GM10248 (cell line): ENCODE measurements at regions of chr16 and their contacts with region 1.

Region 1: DNA sequence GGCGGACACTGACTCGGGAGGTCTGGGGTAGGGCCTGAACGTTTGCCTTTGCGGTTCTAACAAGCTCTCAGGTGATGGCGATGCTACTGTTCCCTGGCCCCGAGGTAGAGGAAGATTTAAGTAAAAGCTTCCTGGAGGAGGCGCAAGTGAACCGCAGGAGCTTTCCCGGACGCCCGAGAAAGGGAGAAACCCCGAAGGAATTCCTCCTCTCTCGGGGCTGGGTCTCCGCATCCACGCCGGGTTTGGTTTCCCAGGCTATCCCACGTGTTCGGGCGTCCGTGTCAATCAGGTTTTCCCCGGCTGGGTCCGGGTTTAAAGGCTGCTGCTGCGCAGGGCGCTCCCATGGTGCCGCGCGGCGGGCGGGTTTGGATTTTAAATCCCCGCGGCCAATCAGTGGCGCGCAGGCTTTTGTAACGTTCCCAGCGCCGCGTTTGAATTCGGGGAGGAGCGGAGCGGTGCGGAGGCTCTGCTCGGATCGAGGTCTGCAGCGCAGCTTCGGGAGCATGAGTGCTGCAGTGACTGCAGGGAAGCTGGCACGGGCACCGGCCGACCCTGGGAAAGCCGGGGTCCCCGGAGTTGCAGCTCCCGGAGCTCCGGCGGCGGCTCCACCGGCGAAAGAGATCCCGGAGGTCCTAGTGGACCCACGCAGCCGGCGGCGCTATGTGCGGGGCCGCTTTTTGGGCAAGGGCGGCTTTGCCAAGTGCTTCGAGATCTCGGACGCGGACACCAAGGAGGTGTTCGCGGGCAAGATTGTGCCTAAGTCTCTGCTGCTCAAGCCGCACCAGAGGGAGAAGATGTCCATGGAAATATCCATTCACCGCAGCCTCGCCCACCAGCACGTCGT is at the start of gene PLK1:
- DNase-seq: peak; percentile 94
- CTCF ChIP-seq: no peak

Region 2: DNA sequence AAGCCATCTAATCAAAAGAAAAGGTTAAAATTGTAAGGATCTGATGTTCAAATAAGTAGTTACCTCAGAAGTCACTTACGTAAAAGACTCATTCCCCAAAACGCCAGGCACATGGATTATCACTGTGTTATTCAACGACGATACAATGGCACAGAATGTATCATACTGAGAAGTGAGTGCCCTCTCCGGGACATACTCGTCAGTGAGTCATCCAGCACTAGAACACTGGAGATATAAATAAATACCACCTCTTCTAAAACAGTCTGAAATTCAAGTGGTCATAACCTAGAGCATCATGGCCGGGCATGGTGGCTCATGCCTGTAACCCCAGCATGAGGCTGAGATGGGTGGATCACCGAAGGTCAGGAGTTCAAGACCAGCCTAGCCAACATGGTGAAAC is 554.3 kb before region 1 on chr16:
- CTCF ChIA-PET with region 1: no interaction called
- POLR2A ChIA-PET with region 1: no interaction called
- DNase-seq: no peak
- CTCF ChIP-seq: no peak

Region 3: DNA sequence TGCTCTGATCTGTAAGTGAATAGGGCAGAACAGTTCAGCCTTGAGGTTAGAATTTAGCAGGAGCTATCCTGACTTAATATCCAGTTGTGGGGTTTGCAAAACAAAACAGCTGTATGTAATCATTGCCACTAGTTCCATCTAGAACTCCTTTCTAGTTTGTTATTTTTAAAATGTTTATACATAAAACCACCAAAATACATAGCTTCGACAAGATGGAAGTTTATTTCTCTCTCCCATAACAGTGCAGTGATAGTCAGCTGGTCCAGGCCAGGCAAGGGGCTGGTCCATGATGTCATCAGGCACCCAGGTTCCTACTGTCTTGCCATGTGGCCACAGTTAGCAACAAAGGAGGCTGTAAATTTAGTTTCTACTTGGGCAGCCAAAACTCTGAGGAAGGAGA is 10.4 kb before region 1 on chr16:
- CTCF ChIA-PET with region 1: interaction called, 10 read pairs
- POLR2A ChIA-PET with region 1: interaction called, 3 read pairs
- DNase-seq: no peak
- CTCF ChIP-seq: no peak

Region 4: DNA sequence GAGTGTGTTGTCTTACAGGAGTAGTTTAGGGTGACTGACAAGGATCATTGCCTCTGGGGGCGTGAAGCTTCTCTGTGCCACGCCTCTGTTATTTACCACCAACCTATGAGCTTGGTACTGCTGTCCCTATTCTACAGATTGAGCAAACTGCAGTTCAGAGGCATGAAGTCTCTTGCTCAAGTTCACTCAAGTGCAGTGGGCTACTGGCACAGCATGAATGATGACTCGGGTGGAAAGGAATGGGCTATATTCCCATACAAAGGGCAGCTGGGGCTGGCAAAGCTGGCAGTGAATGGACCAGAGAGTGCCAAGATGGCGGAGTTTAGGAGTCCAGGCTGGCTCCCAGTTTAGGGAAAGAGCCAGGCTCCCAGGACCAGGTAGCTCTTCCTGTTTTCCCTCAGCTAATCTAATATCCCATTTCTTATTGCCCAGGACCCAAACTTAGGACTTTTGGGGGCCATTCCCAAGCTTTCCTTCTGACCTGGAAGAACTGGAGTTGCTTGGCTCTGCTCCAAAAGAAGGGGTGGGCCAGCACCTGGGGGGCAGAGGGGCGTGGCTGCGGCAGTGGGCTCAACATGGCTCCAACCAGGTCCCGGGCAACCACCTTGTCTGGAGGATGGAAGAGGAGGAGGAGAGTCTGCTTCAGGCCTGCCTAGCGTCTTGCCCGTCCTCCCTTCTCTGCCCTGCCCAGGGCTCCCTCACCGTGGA is 13.0 kb after region 1 on chr16:
- CTCF ChIA-PET with region 1: interaction called, 13 read pairs
- POLR2A ChIA-PET with region 1: no interaction called
- DNase-seq: no peak
- CTCF ChIP-seq: no peak

Region 5: GRCh38 chr16:23803591-23804123 is 125.0 kb after region 1 on chr16:
- CTCF ChIA-PET with region 1: no interaction called
- POLR2A ChIA-PET with region 1: no interaction called
- DNase-seq: peak; percentile 82
- CTCF ChIP-seq: peak; percentile 85